ENCODE measurements at regions of chr11 and their contacts with region 1.

Region 1: DNA sequence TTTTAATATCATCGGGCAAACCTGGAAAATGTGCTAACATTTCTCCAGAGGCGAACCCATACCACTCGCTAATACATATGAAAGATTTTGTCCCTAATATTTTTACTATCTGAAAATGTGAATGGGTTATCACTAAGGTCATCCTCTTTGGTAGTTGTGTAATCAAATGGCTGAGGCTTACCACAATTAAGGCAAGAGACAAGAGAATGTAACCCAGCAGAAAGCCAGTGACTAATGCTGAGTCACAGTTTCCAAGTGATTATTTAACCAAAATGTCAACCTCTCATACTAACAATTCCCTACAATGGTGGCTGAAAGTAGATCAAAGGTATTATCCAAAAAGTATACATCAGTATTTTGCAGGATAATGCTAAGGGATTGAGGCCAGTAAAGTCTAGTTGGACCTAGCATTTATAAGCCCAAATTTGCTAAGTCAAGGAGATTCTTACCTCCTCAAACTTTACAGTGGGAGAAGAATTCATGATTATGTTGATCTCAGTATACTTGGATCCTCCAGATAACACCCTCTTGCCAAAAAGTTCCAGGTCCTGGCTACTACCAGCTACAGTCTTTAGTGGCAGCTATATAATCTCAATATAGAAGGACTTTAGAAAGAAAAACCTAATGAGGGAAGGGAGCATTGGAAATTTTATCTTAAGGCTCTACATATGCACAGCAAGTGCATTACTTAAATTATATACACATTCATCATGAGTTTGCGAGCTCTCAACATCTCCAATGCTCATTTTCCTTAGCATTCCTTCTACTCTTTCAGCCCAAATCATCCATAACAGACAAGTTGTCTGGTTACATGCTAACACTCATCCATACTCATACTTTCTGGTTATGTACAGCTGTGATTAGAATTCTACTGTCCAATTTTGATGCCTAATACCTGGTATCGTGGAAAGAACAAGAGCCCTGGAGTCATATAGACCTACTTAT is 25.4 kb downstream of the SIK3 start:
- DNase-seq: no peak
- H3K4me3 Mint-ChIP-seq: peak overlapping the region; percentile 26
- H3K27ac Mint-ChIP-seq: peak overlapping the region; percentile 82
- H3K4me1 Mint-ChIP-seq: peaks cover 36% of the 10 kb centered on the region
- H3K27me3 Mint-ChIP-seq: no peaks in the 10 kb centered on the region

Region 2: GRCh38 chr11:116772443-116773202 is 300.2 kb before region 1 on chr11 and contains the start of gene BUD13:
- intact Hi-C with region 1: no loop called
- DNase-seq: peak; percentile 99
- H3K4me3 Mint-ChIP-seq: peak within 1 kb of the TSS; percentile 91
- H3K27ac Mint-ChIP-seq: peak within 1 kb of the TSS; percentile 95
- H3K4me1 Mint-ChIP-seq: peaks cover 46% of the 10 kb centered on the region
- H3K27me3 Mint-ChIP-seq: no peaks in the 10 kb centered on the region
- total RNA-seq, gene BUD13: 31.5 and 33.2 TPM in 2 replicates

Region 3: GRCh38 chr11:116972691-116973090 is 100.1 kb before region 1 on chr11:
- intact Hi-C with region 1: no loop called
- DNase-seq: no peak
- H3K4me3 Mint-ChIP-seq: no peak overlapping the region
- H3K27ac Mint-ChIP-seq: no peak overlapping the region
- H3K4me1 Mint-ChIP-seq: peaks cover 8% of the 10 kb centered on the region
- H3K27me3 Mint-ChIP-seq: no peaks in the 10 kb centered on the region

Region 4: GRCh38 chr11:117083011-117083935 is 10.5 kb after region 1 on chr11:
- intact Hi-C with region 1: loop called (anchors 1 kb)
- DNase-seq: no peak
- H3K4me3 Mint-ChIP-seq: no peak overlapping the region
- H3K27ac Mint-ChIP-seq: no peak overlapping the region
- H3K4me1 Mint-ChIP-seq: peaks cover 29% of the 10 kb centered on the region
- H3K27me3 Mint-ChIP-seq: no peaks in the 10 kb centered on the region

Region 5: DNA sequence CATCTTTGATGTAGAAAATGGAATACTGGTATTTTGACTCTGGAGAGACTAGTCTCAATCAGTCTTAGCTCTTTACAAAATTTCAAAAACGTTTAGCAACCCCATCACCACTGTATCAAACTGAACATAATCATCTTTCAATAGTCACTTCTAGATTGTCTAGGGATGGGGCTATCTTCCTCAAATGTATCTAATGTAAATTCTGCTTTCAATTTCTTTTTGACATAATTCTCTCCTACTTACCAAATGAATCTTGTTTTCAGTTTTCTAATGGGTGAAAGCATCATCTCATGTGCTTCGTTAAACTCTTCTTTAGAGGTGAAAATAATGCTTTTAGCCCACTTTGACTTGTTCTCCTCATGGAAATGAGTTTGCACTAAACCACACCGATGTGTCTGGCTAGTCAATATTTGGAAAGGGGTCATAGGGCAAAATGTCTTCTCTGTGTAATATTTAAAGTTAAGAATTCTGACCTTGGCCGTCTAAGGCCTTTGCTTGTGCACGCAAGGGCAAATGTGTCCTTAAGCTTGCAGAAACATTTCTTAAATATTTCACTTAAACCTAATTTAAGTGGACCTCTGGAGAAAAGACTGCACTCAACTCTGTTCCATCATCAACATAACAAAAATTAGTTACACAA is 20.3 kb after region 1 on chr11:
- intact Hi-C with region 1: loop called (anchors 1 kb)
- DNase-seq: no peak
- H3K4me3 Mint-ChIP-seq: peak overlapping the region; percentile 60
- H3K27ac Mint-ChIP-seq: peak overlapping the region; percentile 72
- H3K4me1 Mint-ChIP-seq: peaks cover 62% of the 10 kb centered on the region
- H3K27me3 Mint-ChIP-seq: no peaks in the 10 kb centered on the region

Region 6: GRCh38 chr11:117528097-117528721 is 455.4 kb after region 1 on chr11:
- intact Hi-C with region 1: no loop called
- DNase-seq: no peak
- H3K4me3 Mint-ChIP-seq: no peak overlapping the region
- H3K27ac Mint-ChIP-seq: no peak overlapping the region
- H3K4me1 Mint-ChIP-seq: no peaks in the 10 kb centered on the region
- H3K27me3 Mint-ChIP-seq: no peaks in the 10 kb centered on the region

Measured in activated CD4-positive, alpha-beta T cell treated with anti-CD3 and anti-CD28 coated beads, Interleukin-2, amount 10 ng/mL, durations not matched to agents 24 days and 14 days (primary cell).